ENCODE measurements at regions of chr5 and their contacts with region 1.

Region 1: DNA sequence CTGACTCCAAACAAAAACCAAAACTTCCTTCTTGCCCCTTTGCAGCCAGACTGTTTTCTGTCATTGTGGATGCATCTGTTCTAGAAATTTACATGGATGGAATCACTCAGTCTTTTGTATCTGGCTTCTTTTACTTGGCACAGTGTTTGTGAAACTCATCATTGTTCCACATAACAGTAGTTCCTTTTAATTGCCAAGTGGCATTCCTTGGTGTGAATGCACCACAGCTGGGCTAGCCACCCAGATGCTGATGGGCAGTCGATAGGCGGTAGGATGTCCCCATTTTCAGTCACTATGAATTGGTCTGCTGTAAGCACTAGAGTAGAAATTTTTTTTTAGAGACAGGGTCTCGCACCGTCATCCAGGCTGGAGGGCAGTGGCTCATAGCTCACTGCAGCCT is 6.3 kb upstream of the CLPTM1L start:
- DNase-seq: no peak
- H3K4me3 Mint-ChIP-seq: no peak overlapping the region
- H3K27ac Mint-ChIP-seq: no peak overlapping the region
- H3K4me1 Mint-ChIP-seq: peaks cover 4% of the 10 kb centered on the region
- H3K27me3 Mint-ChIP-seq: peaks cover 78% of the 10 kb centered on the region
- CTCF ChIP-seq: no peak

Region 2: DNA sequence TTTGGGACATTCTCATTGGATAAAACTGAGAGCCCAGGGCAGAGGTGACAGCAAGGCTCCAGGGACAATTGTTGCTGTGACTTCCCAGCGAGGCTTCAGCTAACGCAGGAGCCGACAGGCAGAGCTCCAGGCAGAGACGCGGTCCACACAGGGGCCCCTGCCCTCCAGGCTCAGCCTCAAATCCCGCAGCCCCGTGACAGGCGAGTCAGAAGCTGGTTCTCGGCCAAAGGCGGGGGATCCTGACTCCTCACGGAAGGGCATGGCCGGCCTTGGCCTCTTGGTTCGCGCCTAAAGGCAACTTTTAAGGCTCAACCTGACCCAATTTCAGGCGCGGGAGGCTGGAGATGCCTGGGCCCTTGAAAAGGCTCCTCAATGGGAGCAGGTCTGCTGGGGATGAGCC is 260.6 kb before region 1 on chr5:
- CTCF ChIA-PET with region 1: no interaction called
- intact Hi-C with region 1: no loop called
- DNase-seq: no peak
- H3K4me3 Mint-ChIP-seq: no peak overlapping the region
- H3K27ac Mint-ChIP-seq: no peak overlapping the region
- H3K4me1 Mint-ChIP-seq: no peaks in the 10 kb centered on the region
- H3K27me3 Mint-ChIP-seq: no peaks in the 10 kb centered on the region
- CTCF ChIP-seq: no peak

Region 3: GRCh38 chr5:1204693-1205242 is 146.4 kb before region 1 on chr5:
- CTCF ChIA-PET with region 1: no interaction called
- intact Hi-C with region 1: loop called (anchors 10 kb)
- DNase-seq: peak; percentile 25
- H3K4me3 Mint-ChIP-seq: no peak overlapping the region
- H3K27ac Mint-ChIP-seq: no peak overlapping the region
- H3K4me1 Mint-ChIP-seq: no peaks in the 10 kb centered on the region
- H3K27me3 Mint-ChIP-seq: peaks cover 51% of the 10 kb centered on the region
- CTCF ChIP-seq: peak; percentile 33

Region 4: DNA sequence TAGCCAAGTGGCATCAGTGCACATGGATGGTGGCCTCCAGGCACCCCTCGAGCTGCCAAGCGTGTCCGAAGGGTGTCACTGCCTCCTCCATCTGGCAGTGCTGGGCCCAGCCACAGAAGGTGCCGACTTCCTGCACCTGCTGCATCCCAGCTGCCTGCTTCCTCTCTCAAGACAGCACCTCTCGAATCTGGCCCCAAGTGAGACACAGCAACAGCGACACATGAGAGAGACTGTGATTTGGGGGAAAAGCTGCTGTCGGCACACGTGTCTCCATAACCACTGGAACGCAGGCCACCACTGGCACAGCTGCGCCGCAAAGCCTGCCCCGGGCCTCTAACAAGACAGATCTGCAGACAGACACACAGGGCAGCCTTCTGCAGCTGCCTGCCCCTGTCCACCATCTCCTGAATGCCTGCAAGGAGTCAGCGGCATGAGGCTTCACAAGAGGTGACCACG is 15.0 kb before region 1 on chr5:
- CTCF ChIA-PET with region 1: no interaction called
- intact Hi-C with region 1: no loop called
- DNase-seq: no peak
- H3K4me3 Mint-ChIP-seq: no peak overlapping the region
- H3K27ac Mint-ChIP-seq: no peak overlapping the region
- H3K4me1 Mint-ChIP-seq: no peaks in the 10 kb centered on the region
- H3K27me3 Mint-ChIP-seq: no peaks in the 10 kb centered on the region
- CTCF ChIP-seq: no peak

Measured in Calu3 (cell line).